ENCODE measurements at regions of chr4 and their contacts with region 1.

Region 1: GRCh38 chr4:168923526-168924194 is 86.4 kb downstream of the CBR4 start:
- ATAC-seq: peak; percentile 73 to 99 (median 85)
- H3K4me3 ChIP-seq: no peak overlapping the region
- H3K27ac ChIP-seq: no peak overlapping the region
- H3K4me1 ChIP-seq: peaks cover 0 to 23% of the 10 kb centered on the region in 2 donors

Region 2: DNA sequence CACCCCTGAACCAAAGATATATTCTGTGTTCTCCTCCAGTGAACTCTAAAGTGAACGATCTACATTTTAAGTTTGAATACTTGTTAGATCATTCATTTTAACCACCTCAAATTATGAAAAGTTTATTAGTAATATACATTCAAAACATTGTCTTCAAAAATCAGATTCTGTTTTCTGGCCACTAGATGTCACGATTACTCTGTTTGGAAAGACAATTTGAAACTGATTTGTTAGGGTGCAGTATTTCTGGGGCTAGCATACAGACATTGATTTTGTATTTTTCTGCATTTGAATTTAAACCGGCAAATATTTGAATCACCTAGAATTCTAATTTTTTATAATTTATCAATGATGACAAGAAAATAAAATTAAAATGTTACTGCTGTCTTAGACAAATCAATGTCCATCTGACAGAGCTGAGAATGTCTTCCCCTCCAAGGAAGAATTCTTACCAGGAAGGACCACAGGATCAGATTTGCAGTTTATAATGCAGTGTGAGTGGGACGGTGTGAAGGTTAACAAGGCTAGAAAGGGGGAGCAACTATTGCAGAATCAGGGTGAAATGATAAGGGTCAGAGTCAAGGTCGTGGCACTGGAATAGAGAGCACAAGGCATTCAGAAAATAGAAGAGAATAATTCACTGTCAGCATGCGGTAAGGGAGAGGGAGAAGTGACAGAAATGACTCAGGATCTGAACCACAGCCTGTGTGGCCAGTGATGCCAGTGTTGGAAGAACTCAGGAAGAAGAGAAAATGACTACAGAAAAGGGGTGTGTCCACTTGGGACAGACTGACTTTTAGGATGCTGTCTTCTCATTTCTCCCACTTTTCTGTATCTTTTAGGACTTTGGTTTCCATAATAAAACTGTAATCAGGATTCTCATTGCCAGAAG is 739.7 kb before region 1 on chr4:
- in situ Hi-C with region 1: loop called in 5 of 9 experiments (anchors 25 kb)
- ATAC-seq: peak in 6 of 8 experiments; percentile 30 to 54 (median 46)
- H3K4me3 ChIP-seq: no peak overlapping the region
- H3K27ac ChIP-seq: no peak overlapping the region
- H3K4me1 ChIP-seq: peaks cover 0 to 7% of the 10 kb centered on the region in 2 donors

Region 3: GRCh38 chr4:168585168-168586091 is 338.2 kb before region 1 on chr4:
- in situ Hi-C with region 1: loop called in 2 of 9 experiments (anchors 25 kb)
- ATAC-seq: peak; percentile 87 to 100 (median 92)
- H3K4me3 ChIP-seq: no peak overlapping the region
- H3K27ac ChIP-seq: no peak overlapping the region
- H3K4me1 ChIP-seq: no peaks in the 10 kb centered on the region

Region 4: GRCh38 chr4:168710353-168710946 is 213.2 kb before region 1 on chr4:
- in situ Hi-C with region 1: loop called in 2 of 9 experiments (anchors 25 kb)
- ATAC-seq: peak in 4 of 8 experiments; percentile 33 to 87 (median 84)
- H3K4me3 ChIP-seq: no peak overlapping the region
- H3K27ac ChIP-seq: no peak overlapping the region
- H3K4me1 ChIP-seq: peaks cover 4 to 21% of the 10 kb centered on the region in 2 donors

Region 5: DNA sequence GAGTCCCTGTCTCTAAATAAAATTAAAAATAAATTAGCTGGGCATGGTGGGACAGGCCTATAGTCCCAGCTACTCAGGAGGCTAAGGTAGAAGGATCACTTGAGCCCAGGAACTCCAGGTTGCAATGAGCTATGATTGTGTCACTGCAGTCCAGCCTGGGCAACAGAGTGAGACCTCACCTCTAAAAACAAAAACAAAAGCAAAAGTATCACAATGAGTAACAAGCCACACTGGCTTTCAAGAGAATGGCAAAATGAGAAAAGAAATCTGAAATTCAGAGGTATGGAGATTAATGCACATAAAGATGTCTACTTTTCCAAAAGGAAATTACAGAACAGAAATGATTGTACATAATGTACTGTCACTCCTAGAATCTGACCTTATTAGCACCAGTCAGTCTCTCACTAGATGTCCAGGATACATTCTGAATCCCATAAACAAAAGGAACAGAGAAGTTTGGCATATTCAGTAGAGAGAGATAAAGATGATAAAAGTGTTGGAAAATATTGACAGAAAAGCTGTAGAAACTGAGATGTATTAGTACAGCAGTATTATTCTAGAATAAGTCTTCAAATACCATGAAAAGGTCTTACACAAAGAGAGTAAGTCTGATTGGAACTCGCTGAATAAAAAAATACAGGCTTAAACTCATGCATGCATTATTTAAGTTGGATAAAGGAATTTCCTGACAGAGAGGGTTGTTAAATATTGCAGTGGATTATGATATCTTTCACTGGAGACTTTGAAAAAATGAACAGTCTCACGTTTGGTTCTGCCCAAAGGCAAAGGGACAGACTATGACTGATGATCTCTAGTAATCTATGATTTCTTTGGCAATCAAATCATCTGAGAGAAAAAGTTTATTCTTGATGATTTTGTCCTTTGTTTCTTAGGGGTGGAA is 244.5 kb after region 1 on chr4:
- in situ Hi-C with region 1: no loop called
- ATAC-seq: peak in 3 of 8 experiments; percentile 73 to 82 (median 80)
- H3K4me3 ChIP-seq: no peak overlapping the region
- H3K27ac ChIP-seq: no peak overlapping the region
- H3K4me1 ChIP-seq: peaks cover 0 to 6% of the 10 kb centered on the region in 2 donors